Colonic mucosa (tissue), 4 donors: ENCODE measurements at regions of chr7 and their contacts with region 1.

Region 1: DNA sequence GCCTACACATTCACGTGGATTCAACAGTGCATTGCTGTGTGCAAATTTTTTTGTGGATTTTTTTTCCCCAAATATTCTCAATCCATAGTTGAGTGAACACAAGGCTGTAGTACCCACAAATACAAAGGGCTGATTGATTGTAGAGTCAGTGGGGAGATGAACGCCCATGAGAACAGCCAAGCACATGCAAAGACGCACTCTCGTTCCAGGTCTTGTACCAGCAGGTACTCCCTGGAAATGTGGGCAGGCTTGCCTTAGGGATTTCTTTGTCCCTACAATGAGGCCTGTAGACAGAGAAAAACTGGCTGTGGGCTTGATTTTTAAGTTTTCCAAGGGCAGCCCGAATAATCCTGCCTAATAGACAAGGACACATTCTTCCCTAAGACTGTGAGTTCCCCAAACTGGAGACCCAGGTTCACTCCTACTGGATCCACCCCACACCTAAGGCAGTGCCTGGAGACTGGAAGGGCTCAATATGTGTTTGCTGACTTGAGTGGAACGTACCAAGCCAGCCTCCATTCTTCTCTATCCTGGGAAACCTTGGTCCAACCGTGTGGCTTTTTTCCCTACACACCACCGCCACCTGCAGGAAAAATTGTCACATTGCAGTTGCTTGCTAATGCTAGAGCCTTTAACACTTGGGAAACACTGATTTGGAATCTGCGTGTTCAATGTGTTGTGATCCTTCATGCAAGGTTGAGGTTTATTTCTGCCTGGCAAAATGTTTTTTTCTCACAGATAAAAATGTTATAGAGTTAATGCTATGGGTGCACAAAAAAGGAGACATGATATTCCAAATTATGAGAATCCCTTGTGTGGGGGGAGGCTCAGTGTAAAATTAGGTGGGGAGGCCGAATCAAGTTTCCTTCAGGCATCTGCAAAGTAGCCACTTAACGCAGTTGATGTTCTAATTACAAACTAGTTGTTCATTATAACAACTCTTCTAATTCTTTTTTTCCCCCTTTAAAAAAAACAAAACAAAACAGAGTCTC is 49.3 kb downstream of the PPP1R17 start:
- DNase-seq: peak; percentile 60
- H3K4me3 ChIP-seq: no peak overlapping the region
- H3K27ac ChIP-seq: no peak overlapping the region
- H3K4me1 ChIP-seq: no peaks in the 10 kb centered on the region
- H3K27me3 ChIP-seq: no peaks in the 10 kb centered on the region
- CTCF ChIP-seq: peak; percentile 74

Region 2: GRCh38 chr7:31134246-31135188 is 601.8 kb before region 1 on chr7:
- intact Hi-C with region 1: loop called (anchors 2 kb)
- DNase-seq: peak; percentile 69
- H3K4me3 ChIP-seq: no peak overlapping the region
- H3K27ac ChIP-seq: no peak overlapping the region
- H3K4me1 ChIP-seq: no peaks in the 10 kb centered on the region
- H3K27me3 ChIP-seq: no peaks in the 10 kb centered on the region
- CTCF ChIP-seq: peak; percentile 57